Caco-2 (cell line): ENCODE measurements at regions of chr12 and their contacts with region 1.

Region 1: GRCh38 chr12:55973598-55974307 is at the start of gene RAB5B:
- DNase-seq: peak; percentile 98 to 100
- H3K4me3 ChIP-seq: peak within 1 kb of the TSS; percentile 92
- H3K4me3 Mint-ChIP-seq: no peak within 1 kb of the TSS
- H3K27ac Mint-ChIP-seq: no peak within 1 kb of the TSS
- H3K4me1 ChIP-seq: peaks cover 31% of the 10 kb centered on the region
- H3K4me1 Mint-ChIP-seq: peaks cover 16% of the 10 kb centered on the region
- H3K27me3 ChIP-seq: no peaks in the 10 kb centered on the region
- H3K27me3 Mint-ChIP-seq: no peaks in the 10 kb centered on the region
- CTCF ChIP-seq: peak in 1 of 2 experiments; percentile 21
- total RNA-seq, gene RAB5B: 98.4 and 107 TPM in 2 replicates

Region 2: GRCh38 chr12:55829967-55830600 is 143.7 kb before region 1 on chr12:
- CTCF ChIA-PET with region 1: interaction called, 4 read pairs
- POLR2A ChIA-PET with region 1: interaction called, 18 read pairs
- intact Hi-C with region 1: loop called (anchors 2 kb)
- DNase-seq: peak; percentile 41 to 52
- H3K4me3 ChIP-seq: peak overlapping the region; percentile 76
- H3K4me3 Mint-ChIP-seq: peak overlapping the region; percentile 82
- H3K27ac Mint-ChIP-seq: peak overlapping the region; percentile 85
- H3K4me1 ChIP-seq: no peaks in the 10 kb centered on the region
- H3K4me1 Mint-ChIP-seq: peaks cover 12% of the 10 kb centered on the region
- H3K27me3 ChIP-seq: no peaks in the 10 kb centered on the region
- H3K27me3 Mint-ChIP-seq: no peaks in the 10 kb centered on the region
- CTCF ChIP-seq: no peak

Region 3: DNA sequence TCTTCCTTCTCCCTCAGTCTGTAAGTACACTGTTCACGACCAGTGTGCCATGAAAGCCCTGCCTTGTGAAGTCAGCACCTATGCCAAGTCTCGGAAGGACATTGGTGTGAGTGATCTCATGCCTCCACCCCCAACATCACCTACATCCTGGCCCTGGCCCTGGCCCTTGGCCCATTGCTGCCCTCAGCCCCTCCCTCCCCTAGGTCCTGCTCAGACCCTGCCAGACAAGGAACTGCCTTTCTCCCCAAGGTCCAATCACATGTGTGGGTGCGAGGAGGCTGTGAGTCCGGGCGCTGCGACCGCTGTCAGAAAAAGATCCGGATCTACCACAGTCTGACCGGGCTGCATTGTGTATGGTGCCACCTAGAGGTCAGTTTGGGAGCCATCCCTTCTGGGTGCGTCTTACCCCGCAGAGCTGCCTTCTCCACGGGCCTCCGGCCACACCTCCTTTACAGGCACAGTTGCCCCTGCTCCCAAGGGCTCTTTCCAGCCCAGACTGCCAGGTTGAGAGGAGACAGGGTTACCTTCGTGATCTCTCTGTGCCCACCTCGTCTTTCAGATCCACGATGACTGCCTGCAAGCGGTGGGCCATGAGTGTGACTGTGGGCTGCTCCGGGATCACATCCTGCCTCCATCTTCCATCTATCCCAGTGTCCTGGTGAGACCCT is 33.6 kb before region 1 on chr12:
- CTCF ChIA-PET with region 1: interaction called, 11 read pairs
- POLR2A ChIA-PET with region 1: interaction called, 3 read pairs
- intact Hi-C with region 1: no loop called
- DNase-seq: peak; percentile 84 to 87
- H3K4me3 ChIP-seq: no peak overlapping the region
- H3K4me3 Mint-ChIP-seq: no peak overlapping the region
- H3K27ac Mint-ChIP-seq: no peak overlapping the region
- H3K4me1 ChIP-seq: peaks cover 26% of the 10 kb centered on the region
- H3K4me1 Mint-ChIP-seq: peaks cover 16% of the 10 kb centered on the region
- H3K27me3 ChIP-seq: no peaks in the 10 kb centered on the region
- H3K27me3 Mint-ChIP-seq: no peaks in the 10 kb centered on the region
- CTCF ChIP-seq: peak; percentile 79 to 92

Region 4: GRCh38 chr12:55996715-55997534 is 23.2 kb after region 1 on chr12 and contains the start of gene SUOX:
- CTCF ChIA-PET with region 1: interaction called, 37 read pairs
- POLR2A ChIA-PET with region 1: interaction called, 23 read pairs
- intact Hi-C with region 1: loop called (anchors 1 kb)
- DNase-seq: peak; percentile 97 to 98
- H3K4me3 ChIP-seq: peak within 1 kb of the TSS; percentile 58
- H3K4me3 Mint-ChIP-seq: peak within 1 kb of the TSS; percentile 98
- H3K27ac Mint-ChIP-seq: peak within 1 kb of the TSS; percentile 87
- H3K4me1 ChIP-seq: peaks cover 9% of the 10 kb centered on the region
- H3K4me1 Mint-ChIP-seq: peaks cover 15% of the 10 kb centered on the region
- H3K27me3 ChIP-seq: no peaks in the 10 kb centered on the region
- H3K27me3 Mint-ChIP-seq: no peaks in the 10 kb centered on the region
- CTCF ChIP-seq: no peak
- total RNA-seq, gene SUOX: 37.9 and 40.8 TPM in 2 replicates

Region 5: DNA sequence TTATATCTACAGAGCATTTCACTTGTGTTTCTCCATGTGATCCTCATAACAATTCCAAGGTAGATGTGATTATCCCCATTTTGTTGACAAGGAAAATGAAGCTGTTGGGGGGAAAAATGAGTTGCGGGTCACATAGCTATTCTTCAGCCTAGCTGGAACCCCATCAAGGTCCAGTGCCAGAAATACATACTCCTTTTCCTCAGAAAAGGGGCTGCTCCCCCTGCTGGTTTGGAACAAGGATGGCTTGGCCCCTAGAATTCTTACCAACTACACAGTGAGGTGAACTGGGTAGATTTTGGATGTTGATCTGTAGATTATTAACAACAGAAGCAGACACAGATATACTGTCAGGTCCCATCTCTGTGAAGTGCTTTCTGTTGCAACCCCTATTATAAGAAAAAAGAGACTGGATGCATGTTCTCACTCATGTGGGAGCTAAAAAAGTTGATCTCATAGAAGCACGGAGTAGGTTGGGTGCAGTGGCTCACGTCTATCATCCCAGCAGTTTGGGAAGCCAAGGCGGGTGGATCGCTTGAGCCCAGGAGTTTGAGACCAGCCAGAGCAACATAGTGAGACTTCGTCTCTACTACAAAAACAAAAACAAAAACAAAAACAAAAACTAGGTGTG is 56.0 kb after region 1 on chr12:
- CTCF ChIA-PET with region 1: interaction called, 14 read pairs
- POLR2A ChIA-PET with region 1: interaction called, 6 read pairs
- intact Hi-C with region 1: no loop called
- DNase-seq: peak; percentile 64 to 78
- H3K4me3 ChIP-seq: no peak overlapping the region
- H3K4me3 Mint-ChIP-seq: peak overlapping the region; percentile 7
- H3K27ac Mint-ChIP-seq: peak overlapping the region; percentile 67
- H3K4me1 ChIP-seq: peaks cover 16% of the 10 kb centered on the region
- H3K4me1 Mint-ChIP-seq: peaks cover 16% of the 10 kb centered on the region
- H3K27me3 ChIP-seq: no peaks in the 10 kb centered on the region
- H3K27me3 Mint-ChIP-seq: no peaks in the 10 kb centered on the region
- CTCF ChIP-seq: peak; percentile 78 to 86

Region 6: GRCh38 chr12:56636675-56637540 is 663.2 kb after region 1 on chr12:
- CTCF ChIA-PET with region 1: no interaction called
- POLR2A ChIA-PET with region 1: no interaction called
- intact Hi-C with region 1: loop called (anchors 5 kb)
- DNase-seq: peak; percentile 98 to 99
- H3K4me3 ChIP-seq: peak overlapping the region; percentile 85
- H3K4me3 Mint-ChIP-seq: peak overlapping the region; percentile 98
- H3K27ac Mint-ChIP-seq: peak overlapping the region; percentile 92
- H3K4me1 ChIP-seq: peaks cover 23% of the 10 kb centered on the region
- H3K4me1 Mint-ChIP-seq: peaks cover 6% of the 10 kb centered on the region
- H3K27me3 ChIP-seq: no peaks in the 10 kb centered on the region
- H3K27me3 Mint-ChIP-seq: no peaks in the 10 kb centered on the region
- CTCF ChIP-seq: peak; percentile 57 to 80